ENCODE measurements at regions of chr4 and their contacts with region 1.

Region 1: DNA sequence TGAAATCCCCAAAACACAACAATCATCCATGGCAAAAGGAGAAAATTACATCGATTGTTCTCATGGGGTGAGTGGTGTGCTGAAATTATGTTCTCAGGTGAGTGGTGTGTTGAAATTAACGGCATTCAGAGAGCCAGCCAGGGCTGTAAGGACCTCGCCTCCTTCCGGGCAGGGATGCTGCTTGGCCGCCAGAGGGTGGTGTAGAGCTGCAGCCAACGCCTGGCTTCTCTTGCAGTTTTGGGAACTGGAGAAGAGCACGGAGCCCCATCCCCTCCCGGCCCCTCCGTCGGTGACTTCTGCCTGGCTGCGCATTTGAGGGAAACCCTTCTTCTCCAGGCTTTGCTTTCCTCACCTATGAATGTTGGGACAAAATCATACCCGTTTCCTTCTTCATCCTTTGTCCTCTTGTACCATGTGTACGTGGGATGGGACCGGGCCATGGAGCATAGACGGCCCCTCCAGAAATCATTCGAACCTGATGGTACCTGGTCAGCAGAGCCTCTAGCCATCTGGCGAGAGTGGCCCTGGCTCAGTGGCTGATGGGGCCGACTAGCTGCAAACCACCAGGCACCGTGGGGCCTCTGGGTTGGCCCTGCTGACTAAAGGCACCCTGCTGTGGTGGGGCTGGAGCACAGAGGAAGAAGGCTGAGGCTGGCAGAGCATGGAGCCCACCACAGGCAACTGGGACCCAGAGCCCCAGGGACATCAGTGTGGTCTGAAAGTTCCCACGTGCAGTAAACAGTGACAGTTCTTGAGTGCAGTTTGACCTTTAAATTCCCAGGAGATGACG is 28.4 kb downstream of the TRMT44 start:
- DNase-seq: peak; percentile 69
- H3K4me3 Mint-ChIP-seq: no peak overlapping the region
- H3K27ac Mint-ChIP-seq: no peak overlapping the region
- H3K4me1 Mint-ChIP-seq: no peaks in the 10 kb centered on the region
- H3K27me3 Mint-ChIP-seq: no peaks in the 10 kb centered on the region
- CTCF ChIP-seq: peak; percentile 62

Region 2: GRCh38 chr4:8506373-8507188 is 37.6 kb after region 1 on chr4:
- CTCF ChIA-PET with region 1: no interaction called
- intact Hi-C with region 1: no loop called
- DNase-seq: no peak
- H3K4me3 Mint-ChIP-seq: no peak overlapping the region
- H3K27ac Mint-ChIP-seq: no peak overlapping the region
- H3K4me1 Mint-ChIP-seq: peaks cover 14% of the 10 kb centered on the region
- H3K27me3 Mint-ChIP-seq: peaks cover 20% of the 10 kb centered on the region
- CTCF ChIP-seq: no peak

Region 3: GRCh38 chr4:8537041-8537552 is 68.2 kb after region 1 on chr4:
- CTCF ChIA-PET with region 1: interaction called, 3 read pairs
- intact Hi-C with region 1: loop called (anchors 10 kb)
- DNase-seq: peak; percentile 61
- H3K4me3 Mint-ChIP-seq: no peak overlapping the region
- H3K27ac Mint-ChIP-seq: peak overlapping the region; percentile 68
- H3K4me1 Mint-ChIP-seq: peaks cover 55% of the 10 kb centered on the region
- H3K27me3 Mint-ChIP-seq: no peaks in the 10 kb centered on the region
- CTCF ChIP-seq: no peak

Region 4: DNA sequence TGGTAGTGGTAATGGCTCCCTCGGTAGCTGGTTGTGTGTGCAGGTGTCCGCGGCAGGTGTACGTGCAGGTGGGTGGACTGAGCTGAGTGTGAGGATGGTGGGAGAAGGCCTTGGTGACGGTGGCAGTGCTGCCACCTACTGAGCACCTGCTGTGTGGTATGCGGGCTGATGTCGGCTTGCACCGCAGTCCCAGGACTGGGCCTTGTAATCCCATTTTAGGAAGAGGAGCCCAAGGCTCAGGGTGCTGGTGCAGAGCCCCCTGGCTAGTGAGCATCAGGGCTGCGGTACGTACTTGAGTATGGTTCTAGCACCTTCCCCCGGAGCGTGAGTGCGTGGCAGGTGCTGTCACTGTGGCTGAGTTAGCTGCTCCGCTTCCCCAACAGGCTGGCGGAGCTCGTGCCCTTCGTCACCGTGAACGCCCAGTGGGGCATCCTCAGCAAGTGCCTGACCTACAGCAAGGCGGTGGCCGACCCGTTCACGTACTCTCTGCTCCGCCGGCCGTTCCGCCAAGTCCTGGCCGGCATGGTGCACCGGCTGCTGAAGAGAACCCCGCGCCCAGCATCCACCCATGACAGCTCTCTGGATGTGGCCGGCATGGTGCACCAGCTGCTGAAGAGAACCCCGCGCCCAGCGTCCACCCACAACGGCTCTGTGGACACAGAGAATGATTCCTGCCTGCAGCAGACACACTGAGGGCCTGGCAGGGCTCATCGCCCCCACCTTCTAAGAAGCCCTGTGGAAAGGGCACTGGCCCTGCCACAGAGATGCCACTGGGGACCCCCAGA is 117.9 kb after region 1 on chr4:
- CTCF ChIA-PET with region 1: no interaction called
- intact Hi-C with region 1: loop called (anchors 2 kb)
- DNase-seq: peak; percentile 24
- H3K4me3 Mint-ChIP-seq: no peak overlapping the region
- H3K27ac Mint-ChIP-seq: no peak overlapping the region
- H3K4me1 Mint-ChIP-seq: no peaks in the 10 kb centered on the region
- H3K27me3 Mint-ChIP-seq: peaks cover 80% of the 10 kb centered on the region
- CTCF ChIP-seq: peak; percentile 38

Region 5: GRCh38 chr4:8594097-8595038 is 125.4 kb after region 1 on chr4:
- CTCF ChIA-PET with region 1: interaction called, 3 read pairs
- intact Hi-C with region 1: loop called (anchors 1 kb)
- DNase-seq: peak; percentile 62
- H3K4me3 Mint-ChIP-seq: no peak overlapping the region
- H3K27ac Mint-ChIP-seq: no peak overlapping the region
- H3K4me1 Mint-ChIP-seq: peaks cover 4% of the 10 kb centered on the region
- H3K27me3 Mint-ChIP-seq: peaks cover 41% of the 10 kb centered on the region
- CTCF ChIP-seq: no peak